Sciatic nerve (tissue), 2 donors: ENCODE measurements at regions of chr1 and their contacts with region 1.

Region 1: GRCh38 chr1:44044071-44044801 is 13.0 kb upstream of the SLC6A9 start:
- DNase-seq: no peak
- ATAC-seq: no peak

Region 2: GRCh38 chr1:44002606-44003157 is 41.6 kb before region 1 on chr1:
- intact Hi-C with region 1: loop called (anchors 5 kb)
- DNase-seq: no peak
- ATAC-seq: no peak

Region 3: GRCh38 chr1:44135886-44136285 is 91.7 kb after region 1 on chr1:
- intact Hi-C with region 1: no loop called
- DNase-seq: no peak
- ATAC-seq: no peak